ENCODE measurements at regions of chr9 and their contacts with region 1.

Region 1: GRCh38 chr9:38251036-38251860 is 141.3 kb upstream of the ALDH1B1 start:
- DNase-seq: no peak
- ATAC-seq: no peak
- H3K4me3 ChIP-seq: no peak overlapping the region
- H3K27ac ChIP-seq: no peak overlapping the region
- H3K4me1 ChIP-seq: no peaks in the 10 kb centered on the region
- H3K27me3 ChIP-seq: no peaks in the 10 kb centered on the region
- CTCF ChIP-seq: no peak
- POLR2A ChIP-seq: no peak

Region 2: DNA sequence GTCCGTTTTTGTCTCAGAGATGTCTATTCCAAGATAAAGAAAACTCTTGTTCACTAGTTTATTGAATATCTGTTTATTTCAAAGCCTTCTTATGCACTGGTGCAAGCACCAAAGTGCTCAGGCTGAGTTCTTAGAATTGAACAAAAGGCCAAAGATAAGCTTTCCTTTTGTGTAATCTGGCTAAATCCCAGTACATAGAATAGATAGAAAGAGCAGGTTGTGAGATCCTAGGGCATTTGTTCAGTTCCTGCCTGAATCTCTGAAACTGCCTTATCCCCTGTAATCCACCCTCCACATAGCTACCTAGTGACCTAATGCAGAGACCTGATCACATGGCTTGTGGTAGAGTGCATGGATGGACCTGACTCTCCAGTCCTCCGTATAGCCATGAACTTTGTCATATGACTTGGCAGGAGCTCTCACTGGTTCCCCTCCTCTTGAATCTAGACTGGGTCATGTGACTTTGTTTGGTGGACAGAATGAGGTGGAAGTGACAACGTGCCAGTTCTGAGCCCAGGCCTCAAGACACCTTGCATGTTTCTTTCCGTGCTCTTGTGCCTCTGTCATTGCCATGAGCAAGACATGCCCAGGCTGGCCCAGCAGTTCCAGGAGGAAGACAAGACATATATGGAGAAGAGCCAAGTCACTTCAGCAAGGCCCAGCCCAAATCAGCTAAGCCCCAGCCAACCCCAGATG is 42.9 kb before region 1 on chr9:
- intact Hi-C with region 1: loop called in 1 of 2 experiments (anchors 10 kb)
- DNase-seq: no peak
- ATAC-seq: peak in 2 of 4 donors; percentile 32 to 94
- H3K4me3 ChIP-seq: no peak overlapping the region
- H3K27ac ChIP-seq: no peak overlapping the region
- H3K4me1 ChIP-seq: no peaks in the 10 kb centered on the region
- H3K27me3 ChIP-seq: no peaks in the 10 kb centered on the region
- CTCF ChIP-seq: no peak
- POLR2A ChIP-seq: no peak